ENCODE measurements at regions of chr1 and their contacts with region 1.

Region 1: GRCh38 chr1:7752512-7753417 is 18.3 kb upstream of the VAMP3 start:
- DNase-seq: peak; percentile 62
- H3K4me3 Mint-ChIP-seq: no peak overlapping the region
- H3K27ac Mint-ChIP-seq: no peak overlapping the region
- H3K4me1 Mint-ChIP-seq: peaks cover 13% of the 10 kb centered on the region
- H3K27me3 Mint-ChIP-seq: peaks cover 13% of the 10 kb centered on the region

Region 2: DNA sequence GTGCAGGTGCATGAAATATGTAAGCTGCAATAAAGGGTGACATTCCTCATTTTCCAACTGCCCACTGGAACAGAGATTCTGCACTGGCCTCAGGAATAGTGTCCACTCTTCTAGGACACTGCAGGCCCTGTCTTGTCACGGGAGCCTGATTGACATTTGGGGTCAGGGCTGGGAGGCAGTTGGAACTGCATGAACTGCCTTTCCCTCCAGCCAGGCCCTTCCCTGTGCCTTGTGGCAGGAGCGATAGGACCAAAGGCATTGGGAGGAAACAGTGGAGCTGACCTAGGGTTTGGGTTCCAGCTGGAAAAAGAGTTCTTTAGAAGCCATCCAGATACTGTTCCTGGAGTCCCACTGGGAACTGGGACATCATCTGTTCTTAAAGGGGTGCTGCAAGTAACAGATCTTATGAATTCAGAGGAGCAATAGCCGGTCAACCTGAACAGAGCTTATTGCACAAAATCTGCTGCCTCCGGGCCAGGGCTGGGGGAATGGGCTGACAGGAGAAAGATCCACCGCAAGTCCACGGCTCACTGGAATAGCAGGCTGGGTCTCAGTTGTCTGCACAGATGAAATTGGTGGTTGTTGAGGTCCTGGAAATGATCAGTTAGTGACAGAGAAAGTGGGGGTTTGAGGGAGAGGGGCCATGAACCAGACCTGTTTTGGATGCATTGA is 515.8 kb before region 1 on chr1:
- CTCF ChIA-PET with region 1: no interaction called
- DNase-seq: no peak
- H3K4me3 Mint-ChIP-seq: no peak overlapping the region
- H3K27ac Mint-ChIP-seq: no peak overlapping the region
- H3K4me1 Mint-ChIP-seq: no peaks in the 10 kb centered on the region
- H3K27me3 Mint-ChIP-seq: peaks cover 24% of the 10 kb centered on the region

Region 3: DNA sequence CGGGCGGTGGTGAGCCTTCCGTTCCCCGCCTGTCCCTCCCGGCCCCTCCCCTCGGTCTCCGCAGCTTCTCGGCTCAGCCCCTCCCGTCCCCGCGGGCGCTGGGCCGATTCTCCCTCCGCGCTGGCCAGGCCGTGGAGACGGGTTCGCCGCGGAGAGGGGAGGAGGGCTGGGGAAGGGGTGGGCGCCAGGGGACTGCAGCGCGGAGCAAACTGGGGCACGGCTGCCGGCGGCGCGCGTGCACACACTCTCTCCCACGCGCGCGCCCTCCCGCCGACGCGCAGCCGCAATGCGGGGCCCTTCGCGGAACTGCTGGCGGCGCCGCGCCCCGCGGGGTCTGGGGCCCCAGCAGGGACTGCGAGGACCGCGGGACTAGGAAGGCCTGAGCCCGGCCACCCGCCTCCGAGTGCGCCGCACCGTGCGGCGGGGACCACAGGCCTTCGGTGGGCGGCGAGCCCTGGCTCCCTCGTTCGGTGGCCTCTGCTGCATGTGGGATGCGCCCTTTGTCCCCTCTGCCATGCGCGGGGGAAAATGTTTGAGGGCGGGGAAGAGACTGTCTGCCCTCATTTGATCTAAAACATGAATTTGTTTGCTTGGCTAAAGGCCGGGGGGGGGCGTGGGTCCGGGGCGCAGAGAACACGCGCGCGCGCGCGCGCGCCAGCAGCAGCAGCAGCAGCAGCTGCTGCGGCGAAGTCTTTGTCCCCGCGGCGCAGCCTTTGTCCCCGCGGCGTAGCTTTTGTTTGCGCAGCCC is 72.4 kb before region 1 on chr1:
- CTCF ChIA-PET with region 1: interaction called, 297 read pairs
- DNase-seq: peak; percentile 43
- H3K4me3 Mint-ChIP-seq: peak overlapping the region; percentile 73
- H3K27ac Mint-ChIP-seq: no peak overlapping the region
- H3K4me1 Mint-ChIP-seq: no peaks in the 10 kb centered on the region
- H3K27me3 Mint-ChIP-seq: peaks cover 58% of the 10 kb centered on the region

Region 4: DNA sequence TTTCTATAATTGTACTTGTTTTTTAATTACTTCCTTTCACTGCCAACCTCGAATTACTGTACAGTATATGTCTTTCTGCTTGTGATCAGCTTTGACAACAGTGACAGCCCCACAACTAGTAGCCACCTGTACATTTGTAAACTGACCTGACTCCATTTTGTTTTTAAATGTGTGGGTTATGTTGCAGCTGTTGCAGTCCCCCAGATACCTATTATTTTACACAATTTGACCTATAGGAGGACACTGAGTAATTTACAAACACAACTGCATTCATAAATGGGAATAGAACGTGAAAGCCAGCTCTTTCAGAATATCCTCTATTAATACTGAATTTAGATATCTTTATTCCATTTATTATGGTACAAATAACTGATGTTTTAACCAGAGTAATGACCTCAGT is 15.8 kb after region 1 on chr1:
- CTCF ChIA-PET with region 1: interaction called, 15 read pairs
- DNase-seq: no peak
- H3K4me3 Mint-ChIP-seq: no peak overlapping the region
- H3K27ac Mint-ChIP-seq: no peak overlapping the region
- H3K4me1 Mint-ChIP-seq: peaks cover 24% of the 10 kb centered on the region
- H3K27me3 Mint-ChIP-seq: peaks cover 38% of the 10 kb centered on the region